Activated CD4-positive, alpha-beta memory T cell treated with anti-CD3 and anti-CD28 coated beads, Interleukin-2, amount 10 ng/mL, durations not matched to agents 7 days and 5 days (primary cell): ENCODE measurements at regions of chr1 and their contacts with region 1.

Region 1: DNA sequence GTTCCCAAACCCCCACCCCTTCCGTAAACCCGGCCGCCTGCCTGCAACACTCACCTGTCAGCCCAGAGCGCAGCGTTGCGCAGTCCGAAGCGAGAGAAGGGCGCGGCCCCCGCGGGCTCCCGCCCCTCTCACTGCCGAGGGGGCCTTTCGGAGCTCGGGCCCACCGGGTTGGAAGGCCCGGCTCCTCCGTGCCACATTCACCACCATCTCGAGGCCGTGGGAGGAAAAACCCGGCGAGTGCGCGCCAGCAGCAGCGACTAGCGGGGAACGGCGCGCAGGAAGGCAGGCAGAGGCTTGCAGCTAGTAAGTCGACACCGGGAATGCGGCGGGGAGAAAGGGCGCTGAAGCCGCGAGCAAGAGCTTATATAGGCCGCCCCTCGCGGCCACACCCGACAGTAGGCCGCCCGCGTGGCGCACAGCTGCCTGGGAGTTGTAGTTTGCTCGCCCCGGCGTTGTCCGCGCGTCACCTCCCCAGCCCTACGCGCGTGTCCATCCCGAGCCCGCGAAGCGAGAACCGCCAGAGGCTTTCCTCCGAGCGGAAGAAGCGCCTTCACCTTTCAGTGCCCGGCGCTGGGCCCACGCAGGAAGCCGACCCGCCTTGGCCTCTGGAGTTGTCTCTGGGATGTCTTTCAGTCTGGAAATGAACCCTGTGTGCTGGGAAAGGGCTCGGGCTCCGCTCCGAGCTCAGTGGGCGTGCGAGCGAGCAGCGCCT is 10.4 kb upstream of the RAB42 start:
- DNase-seq: peak; percentile 95
- H3K4me3 Mint-ChIP-seq: peak overlapping the region; percentile 92
- H3K27ac Mint-ChIP-seq: peak overlapping the region; percentile 92
- H3K4me1 Mint-ChIP-seq: peaks cover 38% of the 10 kb centered on the region
- H3K27me3 Mint-ChIP-seq: no peaks in the 10 kb centered on the region

Region 2: DNA sequence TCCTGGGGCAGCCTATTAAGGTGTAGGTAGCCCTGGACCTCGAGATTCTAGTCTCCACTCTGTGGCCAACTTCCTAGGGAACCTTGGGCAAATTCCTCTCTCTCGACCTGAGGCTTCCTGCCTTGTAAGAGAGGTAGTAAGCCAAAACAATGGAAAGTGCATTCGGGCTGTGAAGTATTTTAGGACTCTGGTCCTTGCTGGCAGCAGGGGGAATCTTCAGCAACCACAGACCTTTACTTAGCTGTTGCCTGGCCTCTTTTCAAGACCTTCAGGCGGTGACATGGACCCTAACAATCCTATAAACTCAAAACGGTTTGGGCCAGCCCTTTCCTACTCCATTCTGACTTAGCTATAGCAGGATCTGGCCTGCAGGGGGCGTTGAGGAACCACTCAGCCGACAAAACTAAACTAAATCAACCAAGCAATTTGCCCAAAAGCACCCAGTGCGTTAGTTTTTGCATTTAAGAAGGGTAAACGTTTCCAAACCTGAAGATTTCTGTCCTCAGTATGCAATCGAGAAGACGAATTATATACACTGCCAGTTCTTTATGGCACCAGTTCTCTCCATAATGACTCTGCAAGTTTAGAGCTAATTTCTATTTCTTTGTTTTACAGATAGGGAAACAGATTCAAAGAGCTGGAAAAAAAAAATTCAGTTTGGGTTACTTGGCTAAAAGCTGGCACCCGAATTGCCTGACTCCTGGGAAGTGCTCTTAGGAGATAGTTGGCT is 333.2 kb before region 1 on chr1:
- CTCF ChIA-PET with region 1: interaction called, 3 read pairs
- POLR2A ChIA-PET with region 1: interaction called, 40 read pairs
- DNase-seq: peak; percentile 87
- H3K4me3 Mint-ChIP-seq: peak overlapping the region; percentile 82
- H3K27ac Mint-ChIP-seq: peak overlapping the region; percentile 96
- H3K4me1 Mint-ChIP-seq: peaks cover 52% of the 10 kb centered on the region
- H3K27me3 Mint-ChIP-seq: no peaks in the 10 kb centered on the region

Region 3: DNA sequence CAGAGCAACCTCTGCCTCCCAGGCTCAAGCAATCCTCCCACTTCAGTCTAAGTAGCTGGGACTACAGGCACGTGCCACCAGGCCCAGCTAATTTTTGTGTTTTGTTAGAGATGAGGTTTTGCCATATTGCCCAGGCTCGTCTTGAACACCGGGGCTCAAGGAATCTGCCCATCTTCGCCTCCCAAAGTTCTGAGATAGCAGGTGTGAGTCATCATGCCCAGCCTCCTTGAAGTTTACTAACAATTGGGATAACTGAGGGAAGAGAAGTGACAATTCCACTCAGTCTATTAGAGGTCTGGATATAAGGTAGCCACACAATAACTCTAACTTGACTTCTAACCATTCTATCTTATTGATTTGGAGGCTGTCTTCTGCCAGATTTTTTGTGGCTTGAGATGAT is 82.1 kb before region 1 on chr1:
- CTCF ChIA-PET with region 1: no interaction called
- POLR2A ChIA-PET with region 1: no interaction called
- DNase-seq: no peak
- H3K4me3 Mint-ChIP-seq: no peak overlapping the region
- H3K27ac Mint-ChIP-seq: no peak overlapping the region
- H3K4me1 Mint-ChIP-seq: peaks cover 9% of the 10 kb centered on the region
- H3K27me3 Mint-ChIP-seq: no peaks in the 10 kb centered on the region

Region 4: DNA sequence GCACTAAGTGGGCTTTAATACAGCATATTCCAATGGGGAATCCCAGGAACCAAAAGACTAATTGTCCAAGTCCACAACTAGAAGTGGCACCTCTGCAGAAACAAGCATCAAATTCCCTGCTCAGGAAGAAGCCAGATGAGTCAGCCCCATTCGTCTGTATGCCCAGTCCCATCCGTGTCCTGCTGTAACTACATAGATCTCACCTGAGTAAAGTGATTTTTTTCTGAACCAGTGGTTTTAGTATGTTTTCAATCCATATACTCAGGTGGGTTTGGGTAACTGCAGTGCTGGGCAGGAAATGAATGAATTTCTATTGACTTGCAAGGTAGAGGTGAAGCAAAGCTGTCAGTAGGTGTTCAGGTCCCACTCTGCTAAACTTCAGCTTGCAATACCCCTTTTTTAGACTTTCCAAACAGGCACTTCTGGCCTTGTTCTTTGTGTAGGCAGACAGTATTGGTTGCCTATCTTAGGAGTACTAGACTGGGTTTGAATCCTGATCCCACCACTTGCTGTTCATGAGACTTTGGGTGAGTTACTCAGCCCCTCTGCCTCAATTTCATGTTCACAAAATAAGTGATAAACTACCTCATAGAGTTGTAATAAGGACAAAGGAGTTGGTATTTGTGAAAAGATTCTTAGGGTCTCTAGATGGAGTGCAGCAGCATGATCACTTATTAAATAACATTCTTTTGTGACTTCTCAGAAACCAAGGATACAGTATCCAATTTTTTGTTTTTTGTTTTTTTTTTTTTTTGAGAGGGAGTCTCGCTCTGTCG is 70.8 kb before region 1 on chr1:
- CTCF ChIA-PET with region 1: interaction called, 12 read pairs
- POLR2A ChIA-PET with region 1: interaction called, 264 read pairs
- DNase-seq: no peak
- H3K4me3 Mint-ChIP-seq: peak overlapping the region; percentile 98
- H3K27ac Mint-ChIP-seq: peak overlapping the region; percentile 97
- H3K4me1 Mint-ChIP-seq: peaks cover 58% of the 10 kb centered on the region
- H3K27me3 Mint-ChIP-seq: no peaks in the 10 kb centered on the region

Region 5: GRCh38 chr1:28560886-28561285 is 20.8 kb before region 1 on chr1:
- CTCF ChIA-PET with region 1: interaction called, 36 read pairs
- POLR2A ChIA-PET with region 1: interaction called, 185 read pairs
- DNase-seq: no peak
- H3K4me3 Mint-ChIP-seq: no peak overlapping the region
- H3K27ac Mint-ChIP-seq: no peak overlapping the region
- H3K4me1 Mint-ChIP-seq: peaks cover 2% of the 10 kb centered on the region
- H3K27me3 Mint-ChIP-seq: no peaks in the 10 kb centered on the region

Region 6: GRCh38 chr1:28642847-28643635 is 61.3 kb after region 1 on chr1 and contains the start of gene TAF12:
- CTCF ChIA-PET with region 1: interaction called, 11 read pairs
- POLR2A ChIA-PET with region 1: interaction called, 166 read pairs
- DNase-seq: peak; percentile 95
- H3K4me3 Mint-ChIP-seq: peak within 1 kb of the TSS; percentile 96
- H3K27ac Mint-ChIP-seq: peak within 1 kb of the TSS; percentile 96
- H3K4me1 Mint-ChIP-seq: peaks cover 54% of the 10 kb centered on the region
- H3K27me3 Mint-ChIP-seq: no peaks in the 10 kb centered on the region
- total RNA-seq, gene TAF12: 33.8 to 34.0 TPM

Region 7: GRCh38 chr1:28736450-28737306 is 155.0 kb after region 1 on chr1 and contains the start of gene YTHDF2:
- CTCF ChIA-PET with region 1: interaction called, 19 read pairs
- POLR2A ChIA-PET with region 1: interaction called, 38 read pairs
- DNase-seq: peak; percentile 98
- H3K4me3 Mint-ChIP-seq: peak within 1 kb of the TSS; percentile 97
- H3K27ac Mint-ChIP-seq: peak within 1 kb of the TSS; percentile 94
- H3K4me1 Mint-ChIP-seq: peaks cover 38% of the 10 kb centered on the region
- H3K27me3 Mint-ChIP-seq: no peaks in the 10 kb centered on the region
- total RNA-seq, gene YTHDF2: 69.9 to 70.9 TPM

Region 8: DNA sequence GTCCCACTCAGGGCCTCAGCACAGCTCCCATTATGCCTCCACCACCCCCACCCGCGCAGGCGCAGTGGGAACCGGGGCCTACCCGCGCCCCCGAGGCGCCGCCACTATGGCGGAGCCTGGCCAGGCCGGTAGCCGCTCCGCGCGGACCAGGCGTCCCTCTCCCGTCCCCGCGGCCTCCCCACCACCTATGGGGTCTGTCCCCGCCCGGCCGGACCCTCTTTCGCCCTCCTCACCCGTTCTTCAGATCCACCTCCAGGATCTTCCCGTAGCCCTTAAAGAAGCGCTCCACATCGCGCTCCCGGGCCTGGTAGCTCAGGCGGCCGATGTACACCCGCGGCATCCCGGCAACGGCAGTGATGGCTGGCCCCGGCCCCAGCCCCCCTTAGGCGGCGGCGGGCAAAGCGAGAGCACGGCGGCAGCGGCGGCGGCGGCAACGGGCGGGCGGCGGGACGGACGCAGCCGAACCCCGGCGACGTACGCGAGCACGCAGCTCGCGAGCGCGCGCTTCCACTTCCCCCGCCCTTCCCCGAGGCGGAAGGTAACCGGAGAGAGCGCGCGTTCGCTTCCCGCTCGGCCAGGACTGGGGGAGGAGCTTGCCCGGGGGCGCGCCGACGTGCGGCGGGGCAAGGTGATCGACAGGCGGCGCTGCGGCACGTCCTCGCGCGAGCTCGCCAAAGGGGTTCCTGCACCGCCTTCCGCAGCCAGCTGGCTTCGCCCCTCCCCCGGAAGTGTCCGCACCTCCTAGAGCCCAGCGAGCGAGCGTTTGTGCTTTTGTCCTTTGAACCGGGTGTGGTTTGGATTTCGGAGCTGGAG is 599.9 kb after region 1 on chr1 and contains the start of gene SRSF4:
- CTCF ChIA-PET with region 1: no interaction called
- POLR2A ChIA-PET with region 1: interaction called, 15 read pairs
- DNase-seq: peak; percentile 99
- H3K4me3 Mint-ChIP-seq: peak within 1 kb of the TSS; percentile 98
- H3K27ac Mint-ChIP-seq: peak within 1 kb of the TSS; percentile 95
- H3K4me1 Mint-ChIP-seq: peaks cover 50% of the 10 kb centered on the region
- H3K27me3 Mint-ChIP-seq: no peaks in the 10 kb centered on the region
- total RNA-seq, gene SRSF4: 121 to 123 TPM